ENCODE measurements at regions of chr9 and their contacts with region 1.

Region 1: GRCh38 chr9:133030317-133031129 is at the start of gene GTF3C5:
- DNase-seq: peak; percentile 94 to 97 (median 95)
- H3K4me3 ChIP-seq: peak within 1 kb of the TSS; percentile 84 to 97
- H3K4me3 Mint-ChIP-seq: peak within 1 kb of the TSS; percentile 93 to 99 (median 98)
- H3K27ac ChIP-seq: peak within 1 kb of the TSS; percentile 83
- H3K27ac Mint-ChIP-seq: peak within 1 kb of the TSS; percentile 94 to 99 (median 98)
- H3K4me1 ChIP-seq: peaks cover 27% of the 10 kb centered on the region
- H3K4me1 Mint-ChIP-seq: peaks cover 17 to 69% (median 47%) of the 10 kb centered on the region in 4 donors
- H3K27me3 ChIP-seq: no peaks in the 10 kb centered on the region
- H3K27me3 Mint-ChIP-seq: no peaks in the 10 kb centered on the region
- total RNA-seq, gene GTF3C5: 71.3 to 71.5 TPM

Region 2: GRCh38 chr9:132622159-132622558 is 408.4 kb before region 1 on chr9:
- CTCF ChIA-PET with region 1: no interaction called
- POLR2A ChIA-PET with region 1: no interaction called
- intact Hi-C with region 1: no loop called
- DNase-seq: no peak
- H3K4me3 ChIP-seq: no peak overlapping the region
- H3K4me3 Mint-ChIP-seq: no peak overlapping the region
- H3K27ac ChIP-seq: no peak overlapping the region
- H3K27ac Mint-ChIP-seq: no peak overlapping the region
- H3K4me1 ChIP-seq: no peaks in the 10 kb centered on the region
- H3K4me1 Mint-ChIP-seq: no peaks in the 10 kb centered on the region
- H3K27me3 ChIP-seq: no peaks in the 10 kb centered on the region
- H3K27me3 Mint-ChIP-seq: no peaks in the 10 kb centered on the region

Region 3: DNA sequence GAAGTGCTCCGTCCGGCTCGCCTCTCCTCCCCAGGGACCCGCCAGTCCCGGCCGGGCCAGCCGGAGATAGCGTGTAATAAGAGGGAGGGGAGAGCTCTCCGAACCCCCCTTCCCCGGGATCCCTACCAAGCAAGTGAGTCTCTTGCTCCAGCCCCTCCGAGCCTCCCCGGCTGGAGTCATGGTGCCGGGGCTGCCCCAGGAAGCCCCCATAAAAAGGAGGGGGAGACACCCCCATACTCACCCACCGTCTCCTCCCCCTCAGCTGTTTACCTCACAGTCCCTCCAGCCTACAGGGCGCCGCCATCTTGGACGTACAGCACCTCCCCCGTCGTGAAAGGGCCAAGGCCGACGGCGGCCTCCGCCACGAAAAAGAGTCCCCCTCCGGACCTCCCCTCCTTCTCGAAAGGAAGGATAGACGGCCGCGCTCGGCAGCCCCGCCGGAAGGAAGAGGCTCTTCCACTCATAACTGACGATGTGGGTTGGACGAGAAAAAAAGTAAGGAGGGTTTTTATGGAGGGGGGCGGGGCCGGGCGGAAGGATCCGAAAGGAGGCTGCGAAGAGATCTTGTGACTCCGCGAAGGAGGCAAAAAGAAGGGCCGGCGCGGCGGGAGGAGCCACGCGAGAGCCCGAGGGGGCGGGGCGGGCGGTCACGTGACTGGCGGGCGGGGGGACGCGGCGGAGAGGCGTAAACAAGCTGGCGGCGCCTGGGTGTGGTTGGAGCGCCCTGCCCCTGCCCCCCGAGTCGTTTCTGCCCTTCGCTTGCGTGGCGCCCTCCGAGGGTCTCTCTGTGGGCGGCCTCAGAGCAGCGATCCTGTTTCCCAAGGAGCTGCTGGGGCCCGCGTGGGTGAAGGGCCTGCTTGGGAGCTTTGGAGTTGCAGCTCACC is 86.0 kb before region 1 on chr9 and contains the start of gene TSC1:
- CTCF ChIA-PET with region 1: no interaction called
- POLR2A ChIA-PET with region 1: interaction called, 15 read pairs
- intact Hi-C with region 1: no loop called
- DNase-seq: peak; percentile 96 to 99 (median 97)
- H3K4me3 ChIP-seq: peak within 1 kb of the TSS; percentile 74 to 91
- H3K4me3 Mint-ChIP-seq: peak within 1 kb of the TSS; percentile 94 to 98 (median 96)
- H3K27ac ChIP-seq: peak within 1 kb of the TSS; percentile 90
- H3K27ac Mint-ChIP-seq: peak within 1 kb of the TSS; percentile 99 to 100 (median 100)
- H3K4me1 ChIP-seq: peaks cover 27% of the 10 kb centered on the region
- H3K4me1 Mint-ChIP-seq: peaks cover 11 to 36% (median 22%) of the 10 kb centered on the region in 4 donors
- H3K27me3 ChIP-seq: no peaks in the 10 kb centered on the region
- H3K27me3 Mint-ChIP-seq: peaks cover 0 to 3% of the 10 kb centered on the region in 2 donors
- total RNA-seq, gene TSC1: 72.7 to 76.5 TPM

Region 4: GRCh38 chr9:133041958-133042357 is 11.4 kb after region 1 on chr9:
- CTCF ChIA-PET with region 1: interaction called, 4 read pairs
- POLR2A ChIA-PET with region 1: interaction called, 12 read pairs
- intact Hi-C with region 1: no loop called
- DNase-seq: no peak
- H3K4me3 ChIP-seq: no peak overlapping the region
- H3K4me3 Mint-ChIP-seq: no peak overlapping the region
- H3K27ac ChIP-seq: no peak overlapping the region
- H3K27ac Mint-ChIP-seq: peak overlapping the region in 1 of 7 donors; percentile 22
- H3K4me1 ChIP-seq: no peaks in the 10 kb centered on the region
- H3K4me1 Mint-ChIP-seq: peaks cover 4 to 17% (median 5%) of the 10 kb centered on the region in 4 donors
- H3K27me3 ChIP-seq: no peaks in the 10 kb centered on the region
- H3K27me3 Mint-ChIP-seq: no peaks in the 10 kb centered on the region

Region 5: GRCh38 chr9:133133681-133134418 is 103.3 kb after region 1 on chr9:
- CTCF ChIA-PET with region 1: interaction called, 5 read pairs
- POLR2A ChIA-PET with region 1: interaction called, 36 read pairs
- intact Hi-C with region 1: no loop called
- DNase-seq: peak; percentile 90 to 98 (median 95)
- H3K4me3 ChIP-seq: peak overlapping the region in 1 of 2 donors; percentile 33
- H3K4me3 Mint-ChIP-seq: peak overlapping the region; percentile 75 to 99 (median 88)
- H3K27ac ChIP-seq: peak overlapping the region; percentile 100
- H3K27ac Mint-ChIP-seq: peak overlapping the region; percentile 100
- H3K4me1 ChIP-seq: peaks cover 99% of the 10 kb centered on the region
- H3K4me1 Mint-ChIP-seq: peaks cover 42 to 93% (median 68%) of the 10 kb centered on the region in 4 donors
- H3K27me3 ChIP-seq: no peaks in the 10 kb centered on the region
- H3K27me3 Mint-ChIP-seq: no peaks in the 10 kb centered on the region